ENCODE measurements at regions of chr14 and their contacts with region 1.

Region 1: GRCh38 chr14:34766060-34766459 is 51.7 kb upstream of the CFL2 start:
- DNase-seq: no peak
- H3K4me3 ChIP-seq: no peak overlapping the region
- H3K27ac ChIP-seq: no peak overlapping the region
- H3K4me1 ChIP-seq: no peaks in the 10 kb centered on the region
- CTCF ChIP-seq: peak; percentile 67

Region 2: GRCh38 chr14:34568803-34569202 is 197.3 kb before region 1 on chr14:
- CTCF ChIA-PET with region 1: no interaction called
- POLR2A ChIA-PET with region 1: no interaction called
- intact Hi-C with region 1: loop called (anchors 10 kb)
- DNase-seq: no peak
- H3K4me3 ChIP-seq: no peak overlapping the region
- H3K27ac ChIP-seq: no peak overlapping the region
- H3K4me1 ChIP-seq: no peaks in the 10 kb centered on the region
- CTCF ChIP-seq: no peak

Region 3: GRCh38 chr14:34678306-34678705 is 87.8 kb before region 1 on chr14:
- CTCF ChIA-PET with region 1: no interaction called
- POLR2A ChIA-PET with region 1: no interaction called
- intact Hi-C with region 1: no loop called
- DNase-seq: no peak
- H3K4me3 ChIP-seq: no peak overlapping the region
- H3K27ac ChIP-seq: no peak overlapping the region
- H3K4me1 ChIP-seq: peaks cover 9% of the 10 kb centered on the region
- CTCF ChIP-seq: no peak

Region 4: DNA sequence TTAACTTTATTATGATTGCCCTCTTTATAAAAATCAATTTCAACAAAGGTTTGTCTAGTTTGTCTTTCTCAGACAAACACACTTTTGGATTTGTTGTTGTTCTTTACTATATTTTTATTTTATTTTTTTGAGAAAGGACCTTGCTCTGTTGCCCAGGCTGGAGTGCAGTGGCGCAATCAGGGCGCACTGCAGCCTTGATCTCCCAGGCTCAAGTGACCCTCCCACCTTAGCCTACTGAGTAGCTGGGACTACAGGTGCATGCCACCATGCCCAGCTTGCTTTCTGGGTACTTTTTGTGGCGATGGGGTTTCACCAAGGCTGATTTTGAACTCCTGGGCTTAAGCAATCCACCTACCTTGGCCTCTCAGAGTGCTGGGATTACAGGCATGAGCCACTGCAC is 12.7 kb after region 1 on chr14:
- CTCF ChIA-PET with region 1: no interaction called
- POLR2A ChIA-PET with region 1: interaction called, 10 read pairs
- intact Hi-C with region 1: no loop called
- DNase-seq: no peak
- H3K4me3 ChIP-seq: no peak overlapping the region
- H3K27ac ChIP-seq: no peak overlapping the region
- H3K4me1 ChIP-seq: no peaks in the 10 kb centered on the region
- CTCF ChIP-seq: no peak

Region 5: GRCh38 chr14:34837801-34838322 is 71.8 kb after region 1 on chr14:
- CTCF ChIA-PET with region 1: no interaction called
- POLR2A ChIA-PET with region 1: no interaction called
- intact Hi-C with region 1: no loop called
- DNase-seq: no peak
- H3K4me3 ChIP-seq: no peak overlapping the region
- H3K27ac ChIP-seq: no peak overlapping the region
- H3K4me1 ChIP-seq: peaks cover 4% of the 10 kb centered on the region
- CTCF ChIP-seq: no peak

Region 6: GRCh38 chr14:34906287-34906686 is 140.2 kb after region 1 on chr14:
- CTCF ChIA-PET with region 1: no interaction called
- POLR2A ChIA-PET with region 1: interaction called, 10 read pairs
- intact Hi-C with region 1: no loop called
- DNase-seq: no peak
- H3K4me3 ChIP-seq: no peak overlapping the region
- H3K27ac ChIP-seq: no peak overlapping the region
- H3K4me1 ChIP-seq: no peaks in the 10 kb centered on the region
- CTCF ChIP-seq: no peak